Heart left ventricle (tissue), 16 donors: ENCODE measurements at regions of chr4 and their contacts with region 1.

Region 1: DNA sequence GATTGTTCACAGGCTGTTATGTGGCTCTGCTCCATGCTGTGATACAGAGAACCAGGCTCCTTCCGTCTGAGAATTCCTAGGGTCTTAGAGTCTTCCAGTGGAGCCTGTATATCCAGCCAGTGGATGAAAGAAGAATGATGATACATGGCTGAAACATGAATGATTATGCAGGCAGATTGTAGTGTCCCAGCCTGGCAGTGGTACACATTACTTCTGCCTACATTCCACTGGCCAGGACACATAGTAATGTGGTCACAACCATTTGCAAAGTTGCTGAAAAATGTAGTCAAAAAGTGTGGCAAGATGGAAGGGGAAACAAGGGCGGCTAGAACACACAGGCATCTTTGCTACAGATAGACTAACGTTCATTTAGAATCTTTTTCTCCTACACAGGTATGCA is 4.5 kb upstream of the GBA3 start:
- DNase-seq: no peak
- ATAC-seq: no peak
- H3K4me3 ChIP-seq: no peak overlapping the region
- H3K27ac ChIP-seq: no peak overlapping the region
- H3K4me1 ChIP-seq: peaks cover 0 to 12% (median 0%) of the 10 kb centered on the region in 12 donors
- H3K27me3 ChIP-seq: peaks cover 0 to 5% (median 0%) of the 10 kb centered on the region in 9 donors
- CTCF ChIP-seq: no peak
- POLR2A ChIP-seq: no peak

Region 2: GRCh38 chr4:21790438-21791029 is 897.7 kb before region 1 on chr4:
- intact Hi-C with region 1: loop called (anchors 2 to 5 kb)
- DNase-seq: no peak
- ATAC-seq: no peak
- H3K4me3 ChIP-seq: no peak overlapping the region
- H3K27ac ChIP-seq: no peak overlapping the region
- H3K4me1 ChIP-seq: no peaks in the 10 kb centered on the region
- H3K27me3 ChIP-seq: no peaks in the 10 kb centered on the region
- CTCF ChIP-seq: peak; percentile 32 to 62 (median 50)
- POLR2A ChIP-seq: no peak

Region 3: DNA sequence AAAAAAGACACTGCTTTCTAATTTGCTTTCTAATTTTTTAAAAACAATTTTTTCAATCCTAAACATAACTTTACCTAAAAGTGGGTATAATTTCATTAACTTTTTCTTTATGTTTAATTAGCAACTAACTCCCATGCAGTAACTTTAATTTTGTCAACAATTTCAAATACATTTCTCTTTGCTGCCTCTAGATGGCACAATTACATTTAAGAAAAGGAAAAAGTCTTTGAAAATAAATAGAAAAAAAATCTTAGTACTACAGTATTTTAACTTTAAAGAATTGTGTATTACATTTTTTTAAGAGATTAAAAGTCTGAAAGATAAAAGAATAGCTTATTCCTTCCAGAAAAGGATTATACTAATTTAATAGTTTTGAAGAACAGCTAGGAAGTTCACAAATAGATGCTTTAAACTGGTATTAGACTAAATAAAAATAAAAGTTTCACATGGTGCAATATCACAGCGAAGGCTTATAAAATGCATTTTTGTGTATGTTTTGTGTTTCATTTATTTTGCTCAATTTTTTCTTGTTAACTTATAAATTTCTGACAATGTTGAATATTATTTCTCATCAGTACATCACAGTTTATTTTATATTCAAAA is 277.5 kb before region 1 on chr4:
- intact Hi-C with region 1: loop called (anchors 1 to 5 kb)
- DNase-seq: no peak
- ATAC-seq: no peak
- H3K4me3 ChIP-seq: no peak overlapping the region
- H3K27ac ChIP-seq: no peak overlapping the region
- H3K4me1 ChIP-seq: peaks cover 0 to 4% (median 0%) of the 10 kb centered on the region in 12 donors
- H3K27me3 ChIP-seq: no peaks in the 10 kb centered on the region
- CTCF ChIP-seq: peak; percentile 33 to 71 (median 59)
- POLR2A ChIP-seq: no peak

Region 4: DNA sequence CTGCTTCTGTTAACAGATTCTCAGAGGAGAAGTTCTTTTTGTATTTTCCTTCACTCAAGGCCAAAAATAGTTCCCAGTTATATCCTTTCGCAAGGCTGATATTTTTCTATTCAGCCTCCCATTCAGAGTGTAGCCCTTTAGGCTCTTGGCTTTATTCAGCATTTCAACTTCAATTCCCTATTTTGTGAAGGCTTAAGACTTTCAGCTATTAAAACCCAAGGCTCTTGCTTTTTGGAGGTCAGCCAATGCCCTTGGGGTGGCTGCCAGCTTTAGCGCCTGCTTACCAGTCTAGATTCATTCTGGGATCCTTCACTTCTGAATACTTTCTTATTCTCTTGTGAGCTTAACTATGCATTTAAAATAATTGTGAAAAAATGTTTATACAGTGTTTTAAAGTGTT is 115.0 kb before region 1 on chr4:
- intact Hi-C with region 1: no loop called
- DNase-seq: peak; percentile 26 to 69 (median 42)
- ATAC-seq: peak in 1 of 4 donors; percentile 43
- H3K4me3 ChIP-seq: no peak overlapping the region
- H3K27ac ChIP-seq: peak overlapping the region in 1 of 12 donors; percentile 44
- H3K4me1 ChIP-seq: peaks cover 0 to 8% (median 0%) of the 10 kb centered on the region in 12 donors
- H3K27me3 ChIP-seq: no peaks in the 10 kb centered on the region
- CTCF ChIP-seq: no peak
- POLR2A ChIP-seq: no peak